GM10248 (cell line): ENCODE measurements at regions of chr19 and their contacts with region 1.

Region 1: DNA sequence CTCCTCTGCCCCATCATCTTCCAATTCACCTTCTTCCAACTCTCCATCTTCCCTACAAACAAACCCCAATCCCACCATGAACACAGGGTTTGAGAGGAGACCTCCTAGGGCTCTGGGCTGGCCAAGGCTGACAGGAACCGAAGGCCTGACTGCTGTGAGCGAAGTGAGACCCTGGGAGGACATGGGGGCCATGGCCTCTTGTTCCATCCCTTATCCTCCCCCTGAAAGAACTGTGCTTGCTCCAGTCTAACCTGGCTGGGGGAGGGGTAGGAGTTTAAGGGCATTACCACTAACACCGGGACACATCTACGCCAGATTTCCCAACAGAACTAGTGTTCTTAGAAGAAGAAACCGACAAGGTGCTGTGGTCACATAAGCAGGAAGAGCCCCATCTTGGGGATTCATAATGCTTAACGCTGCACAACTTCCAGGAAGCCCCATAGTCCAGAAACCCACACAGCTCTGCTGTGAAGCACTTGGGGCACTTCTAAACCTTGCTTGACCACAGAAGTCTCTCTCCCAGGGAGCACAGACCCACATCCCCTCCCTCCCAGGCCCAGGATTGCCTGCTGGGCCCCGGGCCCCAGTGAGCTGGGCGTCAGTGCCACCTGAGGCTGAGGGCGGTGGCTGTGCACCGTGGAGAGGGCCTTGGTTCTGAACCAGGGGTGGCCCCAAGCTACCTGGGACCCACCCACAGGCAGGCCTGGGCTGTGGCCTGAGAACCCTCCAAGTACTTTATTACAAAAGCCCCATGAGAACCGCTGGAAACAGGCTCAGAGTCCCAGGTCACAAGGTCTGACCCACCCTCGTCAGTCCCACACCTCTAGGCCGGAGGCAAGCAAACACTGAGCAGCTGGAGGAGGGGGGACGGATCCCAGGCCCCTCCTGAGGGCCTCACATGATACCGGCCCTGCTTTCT is 18.8 kb downstream of the ZC3H4 start:
- DNase-seq: peak; percentile 69
- CTCF ChIP-seq: no peak

Region 2: GRCh38 chr19:47057328-47057727 is 37.5 kb before region 1 on chr19:
- CTCF ChIA-PET with region 1: no interaction called
- POLR2A ChIA-PET with region 1: no interaction called
- DNase-seq: no peak
- CTCF ChIP-seq: no peak

Region 3: DNA sequence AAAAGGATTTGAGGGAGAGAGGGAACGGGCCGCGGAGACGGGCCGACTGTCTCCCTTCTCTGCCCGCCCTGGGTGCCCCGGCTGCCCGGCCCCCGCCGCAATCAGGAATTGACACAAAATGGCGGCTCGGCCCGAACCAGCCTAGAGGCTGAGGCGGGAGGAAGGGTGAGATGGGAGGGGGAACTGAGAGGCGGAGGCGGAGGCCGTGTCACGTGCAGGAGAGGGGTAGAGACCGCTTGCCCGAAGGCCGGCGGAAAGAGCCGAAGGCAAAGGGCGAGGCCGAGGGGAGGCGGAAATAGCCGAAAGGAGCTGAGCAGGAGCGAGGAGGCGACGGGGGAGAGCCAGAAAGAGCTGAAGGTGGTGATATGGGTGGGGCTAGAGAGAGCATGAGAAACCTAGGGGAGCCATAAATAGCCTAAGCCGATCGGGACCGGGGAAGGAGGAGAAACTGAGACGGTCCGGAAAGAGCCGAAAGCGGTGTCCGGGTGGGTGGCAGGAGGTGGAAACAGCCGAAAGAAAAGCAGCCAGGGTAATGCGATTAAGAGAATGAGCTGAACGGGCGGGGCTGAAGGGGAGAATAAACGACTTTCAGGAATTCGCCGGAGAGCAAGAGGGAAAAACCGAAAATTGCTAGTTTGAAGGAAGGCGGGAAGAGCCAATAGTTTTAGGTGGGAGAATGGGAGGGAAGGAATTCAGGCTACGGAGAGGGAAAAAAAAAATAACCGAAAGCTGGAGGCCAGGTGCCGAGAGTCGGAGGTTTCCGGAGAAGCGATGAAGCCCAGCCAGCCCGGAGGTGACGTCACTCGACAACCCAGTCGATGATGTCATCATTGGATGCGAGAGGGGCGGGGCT is 18.4 kb after region 1 on chr19 and contains the start of gene ZC3H4:
- CTCF ChIA-PET with region 1: interaction called, 9 read pairs
- POLR2A ChIA-PET with region 1: interaction called, 20 read pairs
- DNase-seq: peak; percentile 98
- CTCF ChIP-seq: no peak

Region 4: DNA sequence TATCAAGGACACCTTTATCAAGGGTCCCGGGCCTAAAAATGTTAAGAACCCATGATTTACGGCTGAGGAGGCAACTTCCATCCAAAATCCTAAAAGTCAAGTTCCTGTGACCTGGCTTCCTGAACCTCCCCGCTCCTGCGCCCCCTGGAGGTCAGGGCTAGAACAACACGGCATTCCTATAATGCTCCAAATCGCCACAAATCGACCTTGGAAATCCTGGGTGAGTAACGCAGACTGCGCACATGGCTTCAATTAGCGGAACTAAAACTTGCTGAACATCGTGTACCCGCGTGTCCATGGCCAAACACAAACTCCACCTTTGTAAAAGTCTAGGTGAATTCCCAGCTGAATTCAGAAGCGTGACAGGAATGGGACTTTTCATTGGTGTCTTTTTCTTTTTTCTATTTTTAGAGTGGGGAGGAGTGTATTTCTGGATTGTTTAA is 210.5 kb after region 1 on chr19:
- CTCF ChIA-PET with region 1: no interaction called
- POLR2A ChIA-PET with region 1: no interaction called
- DNase-seq: peak; percentile 57
- CTCF ChIP-seq: peak; percentile 95